Esophagus squamous epithelium (tissue), 5 donors: ENCODE measurements at regions of chr5 and their contacts with region 1.

Region 1: DNA sequence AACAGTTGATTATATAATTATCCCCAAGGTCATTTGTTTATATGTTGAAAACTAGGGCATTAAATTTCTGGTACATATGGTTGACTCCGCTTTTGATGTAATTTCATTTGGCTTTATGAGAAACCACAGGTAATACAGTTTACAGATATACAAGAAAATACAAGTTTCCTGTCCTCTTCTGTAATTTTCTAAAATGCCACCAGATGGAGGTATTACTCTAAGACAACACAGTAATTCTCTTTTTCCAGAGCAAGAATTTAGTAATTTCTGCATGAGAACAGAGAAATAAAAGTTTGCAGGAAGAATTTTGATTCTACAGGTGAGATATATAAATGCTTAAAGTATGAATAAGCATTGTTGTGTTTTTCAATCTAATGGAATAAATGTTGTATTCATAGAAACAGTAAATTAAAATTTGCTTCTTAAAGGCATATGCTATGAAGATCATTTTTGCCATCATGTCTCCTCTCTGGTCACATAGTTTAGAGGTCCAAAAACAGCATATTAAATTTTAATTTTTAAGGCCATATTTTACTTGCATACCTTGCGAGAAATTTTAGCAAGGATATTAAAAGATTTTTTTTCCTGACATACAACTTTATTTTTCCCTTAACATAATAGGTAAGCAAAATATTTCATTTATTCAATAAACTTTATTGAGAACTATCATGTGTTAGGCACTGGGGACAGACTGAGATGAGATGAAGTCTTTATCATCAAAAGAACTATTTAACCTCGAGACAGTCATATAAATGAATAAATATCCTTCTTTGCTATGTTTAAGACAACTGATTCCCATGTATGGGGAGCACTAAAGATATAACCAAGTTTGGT is 22.7 kb downstream of the CHD1 start:
- DNase-seq: no peak
- H3K4me3 ChIP-seq: no peak overlapping the region
- H3K27ac ChIP-seq: no peak overlapping the region
- H3K4me1 ChIP-seq: peaks cover 0 to 23% (median 0%) of the 10 kb centered on the region in 3 donors
- H3K27me3 ChIP-seq: no peaks in the 10 kb centered on the region
- CTCF ChIP-seq: peak; percentile 60 to 87 (median 76)
- POLR2A ChIP-seq: no peak

Region 2: DNA sequence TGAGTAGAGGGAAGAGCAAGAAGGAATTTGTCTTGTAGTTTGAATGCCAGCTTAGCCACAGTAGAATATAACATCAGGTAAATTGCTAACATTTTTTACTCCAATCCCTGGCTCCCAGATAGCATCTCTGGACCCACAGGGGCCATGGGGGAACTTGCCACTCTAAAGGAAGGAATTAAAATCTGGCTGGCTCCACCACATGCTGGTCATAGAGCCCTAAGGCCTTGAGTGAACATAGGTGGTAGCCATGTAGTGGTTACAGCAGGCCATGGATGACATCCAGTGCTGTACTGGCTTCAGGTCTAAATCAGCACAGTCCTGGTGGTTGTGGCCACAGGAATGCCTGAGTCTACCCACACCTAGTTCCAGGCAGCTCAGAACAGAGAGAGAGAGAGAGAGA is 242.6 kb before region 1 on chr5:
- intact Hi-C with region 1: no loop called
- DNase-seq: no peak
- H3K4me3 ChIP-seq: no peak overlapping the region
- H3K27ac ChIP-seq: no peak overlapping the region
- H3K4me1 ChIP-seq: no peaks in the 10 kb centered on the region
- H3K27me3 ChIP-seq: no peaks in the 10 kb centered on the region
- CTCF ChIP-seq: no peak
- POLR2A ChIP-seq: no peak

Region 3: DNA sequence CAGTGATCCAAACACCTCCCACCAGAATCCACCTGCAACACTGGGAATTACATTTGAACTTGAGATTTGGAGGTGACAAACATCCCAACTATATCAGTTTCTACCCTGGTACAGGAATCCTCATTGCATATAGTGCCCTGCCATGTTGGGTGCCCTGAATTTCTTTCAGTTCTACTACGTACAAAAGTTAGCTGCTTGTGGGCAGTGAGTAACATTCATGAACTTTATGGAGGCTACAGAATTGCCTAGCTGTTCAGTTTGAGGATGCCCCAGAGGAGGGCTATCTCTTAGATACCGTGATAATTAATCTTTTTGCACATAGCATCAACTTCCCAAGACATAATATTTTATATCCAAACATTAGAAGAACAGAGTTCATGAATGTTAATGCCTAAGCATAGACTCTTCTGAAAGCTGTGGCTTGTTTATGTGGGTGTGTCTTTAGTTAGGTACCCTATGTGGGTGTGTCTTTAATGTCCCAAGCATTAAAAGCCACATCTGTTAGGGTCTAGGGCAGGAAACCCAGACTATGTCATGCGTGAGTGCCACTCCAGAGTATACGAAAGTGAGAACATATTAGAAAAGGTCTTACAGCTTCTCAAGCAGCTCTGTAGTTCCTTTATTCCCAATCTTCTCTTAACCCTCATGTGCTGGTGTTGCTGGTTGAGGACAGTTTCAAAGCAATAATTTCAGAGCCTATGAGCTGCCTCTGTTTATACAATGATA is 69.8 kb after region 1 on chr5:
- intact Hi-C with region 1: no loop called
- DNase-seq: no peak
- H3K4me3 ChIP-seq: no peak overlapping the region
- H3K27ac ChIP-seq: no peak overlapping the region
- H3K4me1 ChIP-seq: peaks cover 0 to 19% (median 0%) of the 10 kb centered on the region in 3 donors
- H3K27me3 ChIP-seq: no peaks in the 10 kb centered on the region
- CTCF ChIP-seq: no peak
- POLR2A ChIP-seq: no peak

Region 4: DNA sequence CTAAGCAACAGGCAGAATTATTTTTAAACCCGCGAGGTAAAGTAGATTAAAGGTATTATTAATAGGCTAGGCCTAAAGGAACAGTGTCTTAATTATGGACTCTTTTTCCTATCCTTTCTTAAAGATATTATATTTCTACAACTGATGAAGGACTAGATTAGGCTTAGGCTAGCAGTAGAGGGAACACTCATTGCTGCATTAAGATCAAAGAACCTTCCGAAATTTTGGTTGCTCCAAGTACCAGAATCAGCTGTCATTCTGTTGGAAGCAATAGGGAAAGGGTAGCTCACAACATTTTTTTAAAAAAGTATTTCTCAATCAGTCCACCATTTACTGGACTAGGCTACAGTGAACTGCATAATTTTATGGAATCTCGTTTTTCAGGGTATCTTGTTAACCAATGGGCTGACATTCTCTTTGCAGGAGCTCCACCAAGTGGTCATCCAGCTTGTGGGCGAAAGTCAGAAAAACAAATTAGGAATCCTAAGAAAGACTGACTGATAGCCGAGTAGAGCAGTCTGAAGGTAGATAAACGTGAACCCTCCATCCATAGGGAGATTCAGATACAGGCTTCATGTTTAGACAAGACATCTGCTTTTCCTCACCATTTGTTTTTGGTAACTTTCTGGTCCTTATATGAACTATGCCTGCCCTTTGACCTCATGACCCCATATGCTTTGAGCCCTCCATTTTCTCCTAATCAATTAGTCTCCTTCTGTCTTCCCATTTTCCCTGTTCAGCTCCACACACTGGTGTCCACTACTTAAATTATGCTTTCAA is 126.3 kb after region 1 on chr5:
- intact Hi-C with region 1: loop called (anchors 5 kb)
- DNase-seq: no peak
- H3K4me3 ChIP-seq: peak overlapping the region; percentile 11 to 57 (median 36)
- H3K27ac ChIP-seq: peak overlapping the region; percentile 45 to 71 (median 66)
- H3K4me1 ChIP-seq: peaks cover 4 to 18% (median 5%) of the 10 kb centered on the region in 3 donors
- H3K27me3 ChIP-seq: no peaks in the 10 kb centered on the region
- CTCF ChIP-seq: peak in 5 of 6 experiments; percentile 53 to 69 (median 66)
- POLR2A ChIP-seq: no peak

Region 5: GRCh38 chr5:99060306-99061261 is 154.5 kb after region 1 on chr5:
- intact Hi-C with region 1: loop called (anchors 5 kb)
- DNase-seq: no peak
- H3K4me3 ChIP-seq: peak overlapping the region in 1 of 4 donors; percentile 3
- H3K27ac ChIP-seq: no peak overlapping the region
- H3K4me1 ChIP-seq: peaks cover 0 to 16% (median 4%) of the 10 kb centered on the region in 3 donors
- H3K27me3 ChIP-seq: no peaks in the 10 kb centered on the region
- CTCF ChIP-seq: peak; percentile 74 to 92 (median 82)
- POLR2A ChIP-seq: no peak